GM12878 (cell line): ENCODE measurements at regions of chr20 and their contacts with region 1.

Region 1: DNA sequence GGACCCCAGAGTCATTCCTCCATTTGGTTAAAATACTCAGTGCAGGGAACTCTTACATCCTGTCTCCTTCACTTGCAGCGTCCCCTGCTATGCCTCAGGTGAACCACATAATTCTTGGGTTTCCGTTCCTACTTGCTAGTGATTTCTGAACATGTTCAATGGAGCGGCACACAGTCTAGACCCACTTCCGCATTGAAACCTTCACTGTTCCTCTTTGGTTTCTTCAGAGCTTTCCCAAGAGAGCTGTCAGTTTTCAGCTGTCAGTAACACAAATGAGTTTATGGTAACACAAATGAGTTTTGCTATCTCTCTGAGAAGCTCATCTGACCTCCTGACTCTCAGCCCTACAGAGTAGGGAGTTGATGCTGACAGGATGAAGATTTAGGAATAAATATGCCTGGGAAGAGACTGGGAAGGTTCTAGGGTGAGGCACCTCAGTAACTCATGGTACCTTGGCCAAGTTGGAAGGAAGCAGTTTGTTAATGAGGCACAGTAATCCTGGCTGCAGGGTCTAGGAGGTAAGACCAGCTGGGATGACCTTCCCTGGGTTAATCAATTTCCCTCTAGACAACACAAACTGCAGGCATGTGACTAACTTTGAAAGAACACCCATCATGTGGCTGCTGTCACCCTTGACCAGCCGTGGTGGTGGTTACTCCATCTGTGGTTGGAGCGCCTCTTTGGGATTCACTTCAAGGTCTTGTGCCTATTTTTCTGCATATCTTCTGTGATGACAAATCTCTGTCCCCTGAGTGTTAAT is 5.4 kb downstream of the SYS1 start:
- DNase-seq: peak; percentile 99
- ATAC-seq: peak; percentile 89
- H3K4me3 ChIP-seq: peak overlapping the region; percentile 32; the same call in 1 of the 2 replicates
- H3K27ac ChIP-seq: peak overlapping the region; percentile 64; the same call in 1 of the 2 replicates
- H3K4me1 ChIP-seq: peaks cover 40% of the 10 kb centered on the region
- H3K27me3 ChIP-seq: no peaks in the 10 kb centered on the region
- CTCF ChIP-seq: peak in 1 of 3 experiments; percentile 20; a peak in 2 of 6 replicates
- EP300 ChIP-seq: peak; percentile 96 to 99
- POLR2A ChIP-seq: no peak
- RAD21 ChIP-seq: no peak

Region 2: GRCh38 chr20:45415774-45416637 is 47.6 kb after region 1 on chr20 and contains the start of gene PIGT:
- CTCF ChIA-PET with region 1: interaction called, 86 read pairs
- POLR2A ChIA-PET with region 1: interaction called, 9 read pairs
- RAD21 ChIA-PET with region 1: interaction called, 24 read pairs
- SMC1A ChIA-PET with region 1: interaction called, 21 read pairs
- in situ Hi-C with region 1: loop called (anchors 5 kb)
- intact Hi-C with region 1: loop called (anchors 2 kb)
- DNase-seq: peak; percentile 51
- ATAC-seq: peak; percentile 83
- H3K4me3 ChIP-seq: peak within 1 kb of the TSS; percentile 97
- H3K27ac ChIP-seq: peak within 1 kb of the TSS; percentile 82
- H3K4me1 ChIP-seq: peaks cover 20% of the 10 kb centered on the region
- H3K27me3 ChIP-seq: no peaks in the 10 kb centered on the region
- CTCF ChIP-seq: no peak
- EP300 ChIP-seq: no peak
- POLR2A ChIP-seq: peak; percentile 99
- RAD21 ChIP-seq: no peak
- polyA plus RNA-seq, gene PIGT: 19.1 to 27.5 TPM

Region 3: DNA sequence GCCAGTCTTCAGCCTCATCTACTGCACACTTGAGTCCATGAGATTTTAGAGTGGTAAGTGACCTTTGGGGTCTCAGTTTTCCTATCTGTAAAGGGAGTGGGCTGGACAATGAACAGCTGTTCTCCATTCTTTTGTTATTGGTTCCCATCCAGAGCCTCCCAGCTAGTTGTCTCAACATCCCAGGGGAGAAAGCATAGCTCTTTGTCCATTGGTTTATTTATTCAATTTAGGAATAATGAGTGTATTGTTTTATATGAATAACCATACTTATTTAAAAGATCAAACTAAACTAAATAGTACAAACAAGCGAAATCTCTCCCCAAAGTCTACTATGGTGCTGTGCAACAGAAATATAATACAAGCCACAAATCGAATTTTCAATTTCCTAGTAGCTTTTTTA is 61.2 kb after region 1 on chr20:
- CTCF ChIA-PET with region 1: interaction called, 685 read pairs
- POLR2A ChIA-PET with region 1: interaction called, 5 read pairs
- RAD21 ChIA-PET with region 1: interaction called, 394 read pairs
- SMC1A ChIA-PET with region 1: interaction called, 440 read pairs
- in situ Hi-C with region 1: no loop called
- intact Hi-C with region 1: no loop called
- DNase-seq: no peak
- ATAC-seq: no peak
- H3K4me3 ChIP-seq: no peak overlapping the region
- H3K27ac ChIP-seq: no peak overlapping the region
- H3K4me1 ChIP-seq: peaks cover 15% of the 10 kb centered on the region
- H3K27me3 ChIP-seq: no peaks in the 10 kb centered on the region
- CTCF ChIP-seq: no peak
- EP300 ChIP-seq: no peak
- POLR2A ChIP-seq: no peak
- RAD21 ChIP-seq: no peak

Region 4: DNA sequence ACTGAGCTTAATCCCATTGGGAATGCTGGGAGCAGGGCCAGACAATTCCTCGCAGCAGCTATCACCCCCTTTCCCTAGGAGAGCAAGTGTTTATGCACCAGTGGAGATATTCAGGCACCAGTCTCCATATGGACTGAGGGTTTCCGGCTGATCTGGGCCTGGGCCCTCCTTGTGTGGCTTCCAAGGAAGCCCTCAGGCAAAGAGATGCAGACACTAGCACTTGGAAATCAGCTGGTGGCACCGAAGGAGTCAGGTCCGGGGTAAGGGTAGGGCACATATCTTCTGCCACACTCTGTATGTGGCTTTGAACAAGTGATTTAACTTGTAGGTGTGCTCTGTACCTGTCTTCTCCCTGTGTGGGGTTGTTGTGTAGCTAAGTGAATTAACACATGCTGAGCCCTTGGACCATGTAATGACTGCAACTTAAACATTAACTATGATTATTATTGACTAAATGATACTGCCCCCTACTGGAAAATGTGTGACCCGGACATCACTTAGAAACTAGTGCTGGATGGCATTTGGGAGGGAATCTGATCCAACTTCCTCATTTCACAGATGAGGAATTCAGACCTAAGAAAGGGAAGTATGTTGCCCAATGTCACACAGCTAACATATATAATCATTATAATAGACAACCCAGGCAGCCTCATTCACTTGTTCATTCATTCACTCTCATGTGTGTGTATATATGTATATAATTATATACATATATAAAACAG is 81.9 kb after region 1 on chr20:
- CTCF ChIA-PET with region 1: interaction called, 57 read pairs
- POLR2A ChIA-PET with region 1: no interaction called
- RAD21 ChIA-PET with region 1: interaction called, 11 read pairs
- SMC1A ChIA-PET with region 1: interaction called, 20 read pairs
- in situ Hi-C with region 1: no loop called
- intact Hi-C with region 1: no loop called
- DNase-seq: no peak
- ATAC-seq: peak; percentile 74
- H3K4me3 ChIP-seq: no peak overlapping the region
- H3K27ac ChIP-seq: no peak overlapping the region
- H3K4me1 ChIP-seq: no peaks in the 10 kb centered on the region
- H3K27me3 ChIP-seq: no peaks in the 10 kb centered on the region; a peak in 3 of 4 replicates
- CTCF ChIP-seq: peak; percentile 46 to 61 (median 60)
- EP300 ChIP-seq: no peak
- POLR2A ChIP-seq: no peak
- RAD21 ChIP-seq: peak; percentile 58